Panc1 (cell line): ENCODE measurements at regions of chr18 and their contacts with region 1.

Region 1: DNA sequence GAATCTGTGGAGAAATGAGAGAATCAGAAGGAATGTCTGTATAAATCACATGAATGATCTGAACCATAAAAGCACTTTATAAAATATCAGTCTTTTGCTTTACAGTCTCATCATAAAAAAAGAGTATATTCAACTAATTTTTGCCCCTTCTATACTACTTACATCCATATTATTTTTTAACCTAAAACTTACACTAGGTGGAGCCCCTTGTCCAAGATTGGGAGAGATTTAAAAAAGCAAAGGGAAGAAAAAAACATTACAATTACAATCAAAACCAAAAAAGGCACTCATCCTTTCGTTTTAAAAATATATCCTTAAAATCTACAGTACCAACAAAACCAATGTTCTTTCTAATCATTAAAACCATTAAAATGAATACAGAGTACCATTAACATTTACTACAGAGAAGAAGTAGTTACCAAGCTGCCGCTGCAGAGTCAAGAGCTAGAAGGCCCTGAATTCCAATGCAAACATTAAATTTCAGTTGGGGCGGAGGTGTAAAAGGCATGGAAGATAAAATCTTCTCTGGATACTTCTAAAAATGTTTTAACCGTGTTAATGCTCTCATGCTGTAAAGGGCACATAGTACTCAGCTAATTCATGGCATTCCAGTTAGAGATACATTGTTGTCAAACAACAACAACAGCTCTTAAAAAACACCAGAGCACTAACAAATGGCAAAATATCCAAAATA is 56.7 kb upstream of the EPB41L3 start:
- DNase-seq: no peak
- ATAC-seq: no peak
- H3K4me3 ChIP-seq: no peak overlapping the region
- H3K27ac ChIP-seq: no peak overlapping the region
- H3K4me1 ChIP-seq: no peaks in the 10 kb centered on the region
- H3K27me3 ChIP-seq: no peaks in the 10 kb centered on the region
- CTCF ChIP-seq: peak; percentile 35; the same call in 1 of the 2 replicates

Region 2: GRCh38 chr18:5582849-5583681 is 17.5 kb before region 1 on chr18:
- CTCF ChIA-PET with region 1: no interaction called
- POLR2A ChIA-PET with region 1: no interaction called
- in situ Hi-C with region 1: no loop called
- intact Hi-C with region 1: no loop called
- DNase-seq: no peak
- ATAC-seq: no peak
- H3K4me3 ChIP-seq: no peak overlapping the region
- H3K27ac ChIP-seq: no peak overlapping the region
- H3K4me1 ChIP-seq: no peaks in the 10 kb centered on the region
- H3K27me3 ChIP-seq: no peaks in the 10 kb centered on the region
- CTCF ChIP-seq: no peak

Region 3: GRCh38 chr18:5709476-5710095 is 109.1 kb after region 1 on chr18:
- CTCF ChIA-PET with region 1: no interaction called
- POLR2A ChIA-PET with region 1: no interaction called
- in situ Hi-C with region 1: no loop called
- intact Hi-C with region 1: no loop called
- DNase-seq: no peak
- ATAC-seq: no peak
- H3K4me3 ChIP-seq: no peak overlapping the region
- H3K27ac ChIP-seq: no peak overlapping the region
- H3K4me1 ChIP-seq: no peaks in the 10 kb centered on the region
- H3K27me3 ChIP-seq: no peaks in the 10 kb centered on the region
- CTCF ChIP-seq: no peak

Region 4: GRCh38 chr18:5841518-5841917 is 241.0 kb after region 1 on chr18:
- CTCF ChIA-PET with region 1: no interaction called
- POLR2A ChIA-PET with region 1: no interaction called
- in situ Hi-C with region 1: no loop called
- intact Hi-C with region 1: loop called (anchors 10 kb)
- DNase-seq: no peak
- ATAC-seq: no peak
- H3K4me3 ChIP-seq: no peak overlapping the region
- H3K27ac ChIP-seq: no peak overlapping the region
- H3K4me1 ChIP-seq: no peaks in the 10 kb centered on the region
- H3K27me3 ChIP-seq: no peaks in the 10 kb centered on the region
- CTCF ChIP-seq: peak; percentile 10; the same call in 1 of the 2 replicates